ENCODE measurements at regions of chr19 and their contacts with region 1.

Region 1: DNA sequence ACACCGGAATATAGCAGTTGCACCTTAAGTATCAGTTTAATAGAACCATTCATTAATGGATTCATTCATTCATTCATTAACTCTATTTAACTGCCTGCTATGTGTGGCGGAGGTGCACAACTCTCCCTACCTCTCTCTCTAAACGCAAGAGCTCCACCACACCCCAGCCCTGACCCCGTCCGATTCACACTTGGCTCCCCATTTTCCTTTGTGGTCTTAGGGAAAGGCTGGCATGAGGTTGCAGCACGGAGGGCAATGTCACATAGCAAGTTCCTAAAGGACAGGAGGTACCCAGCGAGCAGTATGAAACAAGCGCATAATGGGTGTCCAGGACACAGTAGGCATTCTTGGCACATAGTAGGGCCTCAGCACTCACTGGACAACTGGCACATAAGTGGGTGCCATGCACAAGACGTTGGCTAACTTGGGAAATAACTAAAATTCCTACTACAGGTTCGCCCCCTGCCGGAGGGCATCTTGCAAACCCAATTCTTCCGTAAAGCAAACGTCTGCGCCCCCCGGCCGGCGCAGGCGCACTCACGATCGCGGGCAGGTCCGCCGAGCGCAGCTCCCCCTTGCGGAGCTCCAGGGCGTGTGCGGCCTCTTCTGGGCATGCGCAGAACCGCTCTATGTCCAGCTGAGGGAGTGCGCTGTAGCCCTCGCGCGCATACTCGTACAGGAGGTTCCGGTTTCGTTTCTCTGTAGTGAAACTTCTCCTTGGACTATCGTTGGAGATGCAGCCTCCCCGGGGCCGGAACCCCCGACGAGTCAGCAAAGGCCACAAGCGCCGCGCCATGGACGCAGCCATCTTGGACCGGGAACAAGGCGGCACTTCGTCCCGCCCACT is at the start of gene SARS2:
- DNase-seq: peak; percentile 96
- total RNA-seq, gene SARS2: 12.6 TPM

Region 2: DNA sequence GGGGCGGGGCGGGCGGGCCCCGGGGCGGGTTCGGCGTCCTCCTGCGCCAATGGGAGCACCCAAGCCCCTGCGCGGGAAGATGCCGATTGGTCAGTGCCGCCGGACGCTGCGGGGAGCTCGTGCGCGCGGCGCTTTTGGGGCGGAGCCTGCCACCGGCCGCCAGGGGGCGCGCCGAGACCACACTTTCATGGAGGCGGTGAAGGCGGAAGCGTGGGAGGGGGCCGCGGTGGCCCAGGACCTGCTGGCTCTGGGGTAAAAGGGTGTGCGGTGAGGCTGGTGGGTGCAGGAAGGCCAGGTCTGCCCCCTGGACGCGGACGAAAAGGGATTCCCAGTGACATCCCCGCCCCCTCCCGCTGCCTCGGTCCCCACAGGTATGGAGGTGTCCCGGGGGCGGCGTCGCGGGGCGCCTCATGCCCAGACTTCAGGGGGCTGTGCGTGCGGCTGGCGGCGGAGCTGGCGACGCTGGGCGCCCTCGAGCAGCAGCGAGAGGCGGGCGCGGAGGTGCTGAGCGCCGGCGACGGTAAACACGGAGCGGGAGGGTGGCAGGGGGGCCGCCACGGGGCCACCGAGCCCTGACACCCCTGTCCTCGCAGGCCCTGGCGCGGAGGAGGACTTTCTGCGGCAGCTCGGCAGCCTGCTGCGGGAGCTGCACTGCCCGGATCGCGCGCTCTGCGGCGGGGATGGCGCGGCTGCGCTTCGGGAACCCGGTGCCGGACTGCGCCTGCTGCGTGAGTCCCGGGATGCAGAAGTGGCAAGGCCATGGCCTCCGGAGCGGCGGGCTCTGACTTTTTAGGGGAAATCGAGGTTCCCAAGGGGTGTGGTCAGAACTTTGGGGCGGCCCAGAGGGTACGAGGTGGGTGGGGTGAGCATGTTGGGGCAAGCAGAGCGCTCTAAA is 526.9 kb before region 1 on chr19 and contains the start of gene FAM98C:
- intact Hi-C with region 1: loop called (anchors 5 kb)
- DNase-seq: peak; percentile 99
- total RNA-seq, gene FAM98C: 14.2 TPM

Region 3: DNA sequence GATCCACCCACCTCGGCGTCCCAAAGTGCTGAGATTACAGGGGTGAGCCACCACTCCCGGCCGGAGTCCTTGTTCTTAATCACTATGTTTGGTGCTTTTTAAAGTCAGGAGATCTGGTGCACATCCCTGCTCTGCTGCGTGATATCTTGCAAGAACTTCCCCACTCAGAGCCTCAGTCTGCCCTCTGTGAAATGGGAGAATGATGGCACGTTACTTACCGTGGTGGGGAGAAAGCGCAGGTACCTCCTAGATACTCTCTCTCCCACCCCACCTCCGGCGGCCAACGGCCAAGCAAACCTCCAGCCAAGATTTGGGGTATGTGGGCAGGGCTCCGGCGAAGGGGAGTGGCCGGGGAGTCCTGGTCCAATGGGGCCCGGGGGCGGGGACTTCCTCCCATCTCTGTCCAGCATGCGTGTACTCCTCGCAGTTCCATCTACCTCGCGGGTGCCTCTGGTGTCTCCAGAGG is 496.9 kb before region 1 on chr19 and contains the start of gene RYR1:
- intact Hi-C with region 1: no loop called
- DNase-seq: peak; percentile 91
- total RNA-seq, gene RYR1: 1.3 TPM

Region 4: DNA sequence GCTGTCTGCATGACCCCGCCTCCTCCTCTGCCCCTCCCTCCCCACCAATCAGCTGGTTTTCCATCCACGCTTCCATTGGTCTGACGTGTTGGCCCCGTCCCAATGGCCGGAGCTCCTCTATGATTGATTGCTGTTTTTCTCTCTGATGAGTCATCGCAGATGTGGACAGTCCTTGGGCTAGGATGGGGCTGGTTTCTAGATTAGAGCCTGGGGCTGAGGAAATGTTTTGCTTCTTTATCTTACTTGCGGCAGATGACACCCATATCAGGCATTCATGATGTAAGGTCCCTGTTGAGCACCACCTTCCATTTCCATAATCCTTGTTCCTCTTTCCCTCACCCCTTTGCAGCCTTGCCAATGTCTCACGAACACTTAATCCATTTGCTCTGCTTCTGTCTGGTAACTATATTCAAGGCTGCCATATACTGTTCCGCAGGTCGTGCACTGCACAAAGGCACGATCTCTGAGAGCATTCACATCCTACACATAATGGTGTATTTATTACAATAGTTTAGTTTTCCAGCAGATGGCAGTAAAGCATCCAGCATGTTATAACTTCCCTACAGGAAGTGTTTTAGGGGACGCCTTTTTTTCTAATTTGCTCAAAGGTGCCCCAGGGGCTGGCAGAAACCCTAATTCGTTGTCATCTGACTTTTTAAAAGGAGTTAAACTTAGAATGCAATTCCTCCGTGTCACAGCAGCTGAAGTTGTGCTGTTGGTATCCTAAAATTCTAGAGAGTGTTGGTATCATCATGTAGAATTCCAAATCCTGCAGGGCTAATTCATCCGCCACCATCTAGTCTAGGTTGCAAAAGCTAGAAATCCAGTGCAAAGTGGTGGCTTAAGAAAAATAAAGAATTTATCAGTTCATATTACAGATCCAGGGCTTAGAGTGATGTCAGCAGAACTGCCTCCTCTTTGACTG is 385.9 kb before region 1 on chr19:
- intact Hi-C with region 1: loop called (anchors 2 kb)
- DNase-seq: no peak

Region 5: GRCh38 chr19:38634757-38635482 is 295.2 kb before region 1 on chr19:
- intact Hi-C with region 1: loop called (anchors 5 kb)
- DNase-seq: peak; percentile 91

Region 6: GRCh38 chr19:38899447-38900219 is 30.5 kb before region 1 on chr19 and contains the starts of genes NFKBIB and SIRT2:
- intact Hi-C with region 1: loop called (anchors 2 kb)
- DNase-seq: peak; percentile 100
- total RNA-seq, gene NFKBIB: 22.0 TPM
- total RNA-seq, gene SIRT2: 49.6 TPM

Region 7: DNA sequence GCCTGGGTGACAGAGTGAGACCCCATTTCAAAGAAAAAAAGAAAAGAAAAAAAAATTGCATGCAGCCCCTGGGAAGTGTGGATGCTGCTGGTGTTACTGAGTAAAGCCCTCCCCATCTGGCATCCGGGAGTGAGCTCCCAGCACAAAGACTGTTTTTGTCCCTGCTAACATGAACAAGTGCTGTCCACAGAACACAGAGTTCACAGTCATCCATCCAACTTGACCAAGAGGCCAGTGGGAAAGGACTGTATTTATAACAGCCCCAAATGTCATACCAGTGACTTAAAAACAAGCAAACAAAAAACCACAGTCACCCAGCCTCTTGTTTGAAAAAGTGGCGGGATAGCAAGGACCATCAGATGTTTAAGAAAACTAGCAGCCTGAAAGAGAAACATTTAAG is 34.6 kb after region 1 on chr19:
- intact Hi-C with region 1: no loop called
- DNase-seq: no peak